ENCODE measurements at regions of chr1 and their contacts with region 1.

Region 1: GRCh38 chr1:53754484-53755312 is 15.7 kb upstream of the GLIS1 start:
- DNase-seq: peak; percentile 46
- ATAC-seq: peak; percentile 34
- H3K4me3 Mint-ChIP-seq: no peak overlapping the region
- H3K27ac Mint-ChIP-seq: no peak overlapping the region
- H3K4me1 Mint-ChIP-seq: no peaks in the 10 kb centered on the region
- H3K27me3 Mint-ChIP-seq: no peaks in the 10 kb centered on the region
- CTCF ChIP-seq: peak; percentile 72

Region 2: DNA sequence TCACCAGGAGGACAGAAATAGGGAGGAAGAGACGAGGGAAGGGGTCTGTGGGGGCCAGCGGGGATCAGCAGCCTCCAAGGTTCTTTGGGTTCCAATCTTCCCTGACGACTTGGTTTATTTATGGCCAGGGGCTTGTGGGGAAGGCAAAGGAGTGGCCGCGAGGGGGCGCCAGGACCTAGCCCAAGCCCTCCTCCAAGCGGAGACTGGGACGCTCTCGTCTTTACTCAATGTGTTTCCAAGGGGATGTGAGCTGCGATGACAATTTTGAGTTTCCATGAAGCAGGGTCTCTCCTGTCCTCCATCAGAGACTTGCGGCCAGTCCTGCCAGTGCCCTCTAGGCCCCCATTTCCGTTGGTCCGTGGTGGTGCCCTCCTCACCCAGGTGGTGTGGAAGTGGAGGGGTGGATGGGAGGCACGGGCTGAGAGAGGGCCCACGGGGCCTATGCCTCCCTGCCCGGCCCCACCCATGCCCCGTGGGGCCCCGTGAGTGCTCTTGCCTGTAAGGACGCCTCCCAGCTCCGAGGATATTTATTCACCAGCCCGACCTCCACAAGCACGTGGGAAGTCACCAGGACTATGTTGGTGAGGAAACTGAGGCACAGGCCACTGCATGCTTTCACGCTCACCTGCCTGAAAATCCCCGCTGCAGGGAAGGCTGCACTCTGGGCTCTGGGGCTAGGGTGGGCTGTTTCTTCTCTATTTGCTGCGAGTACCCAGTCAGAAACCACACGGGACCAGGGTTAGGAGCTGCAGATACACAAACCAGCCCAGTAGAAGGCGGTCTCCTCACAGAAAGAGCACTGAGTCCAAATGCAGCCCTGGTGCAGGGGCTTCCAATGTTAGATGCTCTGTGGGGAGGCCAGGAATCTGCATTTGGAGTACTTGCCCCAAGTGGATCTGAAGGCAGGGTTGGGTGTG is 269.0 kb before region 1 on chr1:
- CTCF ChIA-PET with region 1: interaction called, 8 read pairs
- POLR2A ChIA-PET with region 1: no interaction called
- intact Hi-C with region 1: loop called (anchors 2 kb)
- DNase-seq: peak; percentile 87
- ATAC-seq: peak; percentile 80
- H3K4me3 Mint-ChIP-seq: no peak overlapping the region
- H3K27ac Mint-ChIP-seq: no peak overlapping the region
- H3K4me1 Mint-ChIP-seq: no peaks in the 10 kb centered on the region
- H3K27me3 Mint-ChIP-seq: peaks cover 9% of the 10 kb centered on the region
- CTCF ChIP-seq: peak; percentile 80

Region 3: DNA sequence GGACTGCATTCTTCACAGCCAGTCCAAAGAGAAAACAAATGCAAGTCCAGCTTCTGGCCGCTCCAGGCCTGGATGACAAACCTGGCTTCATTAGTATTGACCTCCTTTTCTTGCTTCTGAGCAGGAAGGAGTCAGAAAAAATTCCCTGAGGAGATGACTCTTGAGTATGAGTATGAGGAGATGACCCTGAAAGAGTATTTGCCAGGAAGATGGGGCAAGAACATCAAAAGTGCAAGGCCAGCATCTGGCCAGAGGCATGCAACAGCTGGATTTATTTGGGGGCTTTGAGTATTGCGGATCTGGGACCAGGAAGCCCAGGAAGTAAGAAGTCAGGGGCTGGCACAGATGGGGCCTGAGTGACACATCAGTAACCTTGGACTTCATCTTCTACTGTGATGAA is 129.6 kb before region 1 on chr1:
- CTCF ChIA-PET with region 1: no interaction called
- POLR2A ChIA-PET with region 1: no interaction called
- intact Hi-C with region 1: no loop called
- DNase-seq: no peak
- ATAC-seq: no peak
- H3K4me3 Mint-ChIP-seq: no peak overlapping the region
- H3K27ac Mint-ChIP-seq: no peak overlapping the region
- H3K4me1 Mint-ChIP-seq: no peaks in the 10 kb centered on the region
- H3K27me3 Mint-ChIP-seq: no peaks in the 10 kb centered on the region
- CTCF ChIP-seq: no peak

Region 4: GRCh38 chr1:53765657-53766056 is 11.0 kb after region 1 on chr1:
- CTCF ChIA-PET with region 1: interaction called, 19 read pairs
- POLR2A ChIA-PET with region 1: no interaction called
- intact Hi-C with region 1: no loop called
- DNase-seq: no peak
- ATAC-seq: peak; percentile 80
- H3K4me3 Mint-ChIP-seq: no peak overlapping the region
- H3K27ac Mint-ChIP-seq: peak overlapping the region; percentile 46
- H3K4me1 Mint-ChIP-seq: peaks cover 21% of the 10 kb centered on the region
- H3K27me3 Mint-ChIP-seq: no peaks in the 10 kb centered on the region
- CTCF ChIP-seq: no peak

Measured in activated CD8-positive, alpha-beta T cell treated with anti-CD3 and anti-CD28 coated beads for 36 hours (primary cell).